ENCODE measurements at regions of chr22 and their contacts with region 1.

Region 1: GRCh38 chr22:25334162-25334490 is 114.7 kb downstream of the CRYBB2 start:
- DNase-seq: peak; percentile 78
- H3K4me3 Mint-ChIP-seq: no peak overlapping the region
- H3K27ac Mint-ChIP-seq: no peak overlapping the region
- H3K4me1 Mint-ChIP-seq: no peaks in the 10 kb centered on the region
- H3K27me3 Mint-ChIP-seq: no peaks in the 10 kb centered on the region

Region 2: DNA sequence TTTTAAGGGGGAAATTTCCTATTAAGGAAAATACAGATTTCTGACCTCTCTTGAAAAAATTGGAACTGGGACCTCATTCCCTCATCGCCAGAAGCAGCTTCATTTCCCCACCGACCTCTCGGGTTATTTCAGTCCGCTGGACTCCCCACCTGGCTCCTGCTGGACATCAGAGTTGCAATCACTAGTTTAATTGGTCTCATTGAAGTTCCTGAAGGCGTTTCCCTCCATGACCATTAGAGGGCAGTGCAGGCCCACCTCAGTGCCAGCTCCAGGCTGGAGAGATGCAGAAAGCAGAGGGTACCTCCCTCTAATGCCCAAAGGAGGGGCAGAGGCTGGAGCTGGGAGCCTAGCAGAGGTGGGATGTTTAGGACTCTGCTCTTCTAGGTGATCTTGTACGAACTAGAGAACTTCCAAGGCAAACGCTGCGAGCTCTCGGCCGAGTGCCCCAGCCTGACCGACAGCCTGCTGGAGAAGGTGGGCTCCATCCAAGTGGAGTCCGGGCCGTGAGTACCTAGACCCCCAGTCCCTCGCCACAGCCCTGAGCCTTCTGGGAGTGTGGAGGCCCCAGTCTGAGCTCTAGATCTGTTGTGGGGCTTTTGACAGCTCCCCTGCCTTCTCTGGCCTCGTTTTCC is 131.7 kb before region 1 on chr22:
- CTCF ChIA-PET with region 1: interaction called, 9 read pairs
- intact Hi-C with region 1: loop called (anchors 10 kb)
- DNase-seq: peak; percentile 77
- H3K4me3 Mint-ChIP-seq: no peak overlapping the region
- H3K27ac Mint-ChIP-seq: no peak overlapping the region
- H3K4me1 Mint-ChIP-seq: no peaks in the 10 kb centered on the region
- H3K27me3 Mint-ChIP-seq: no peaks in the 10 kb centered on the region

Region 3: GRCh38 chr22:25235547-25236290 is 98.4 kb before region 1 on chr22:
- CTCF ChIA-PET with region 1: no interaction called
- intact Hi-C with region 1: loop called (anchors 10 kb)
- DNase-seq: peak; percentile 86
- H3K4me3 Mint-ChIP-seq: no peak overlapping the region
- H3K27ac Mint-ChIP-seq: no peak overlapping the region
- H3K4me1 Mint-ChIP-seq: peaks cover 5% of the 10 kb centered on the region
- H3K27me3 Mint-ChIP-seq: peaks cover 40% of the 10 kb centered on the region

Region 4: DNA sequence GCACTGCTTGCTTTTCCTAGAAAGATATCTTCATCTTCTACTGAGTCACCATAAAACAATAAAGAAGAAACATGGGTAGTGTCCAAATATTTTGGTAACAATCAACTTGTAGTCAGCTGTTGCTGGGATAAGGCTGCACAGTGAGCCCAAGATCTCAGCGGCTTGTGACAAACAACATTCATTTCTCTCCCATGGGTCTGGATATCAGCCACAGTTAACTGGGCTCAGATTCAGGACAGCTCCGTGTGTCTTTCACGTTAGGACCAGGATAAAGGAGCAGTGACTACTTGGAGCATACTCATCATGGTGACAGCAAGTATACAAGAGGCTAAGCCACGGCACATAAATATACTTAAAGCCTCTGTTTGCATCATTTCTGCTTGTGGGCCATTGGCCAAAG is 202.5 kb after region 1 on chr22:
- CTCF ChIA-PET with region 1: no interaction called
- intact Hi-C with region 1: no loop called
- DNase-seq: no peak
- H3K4me3 Mint-ChIP-seq: no peak overlapping the region
- H3K27ac Mint-ChIP-seq: no peak overlapping the region
- H3K4me1 Mint-ChIP-seq: no peaks in the 10 kb centered on the region
- H3K27me3 Mint-ChIP-seq: no peaks in the 10 kb centered on the region